Activated B cell treated with CpG ODN at 0.5 μM for 24 hours (primary cell): ENCODE measurements at regions of chr12 and their contacts with region 1.

Region 1: DNA sequence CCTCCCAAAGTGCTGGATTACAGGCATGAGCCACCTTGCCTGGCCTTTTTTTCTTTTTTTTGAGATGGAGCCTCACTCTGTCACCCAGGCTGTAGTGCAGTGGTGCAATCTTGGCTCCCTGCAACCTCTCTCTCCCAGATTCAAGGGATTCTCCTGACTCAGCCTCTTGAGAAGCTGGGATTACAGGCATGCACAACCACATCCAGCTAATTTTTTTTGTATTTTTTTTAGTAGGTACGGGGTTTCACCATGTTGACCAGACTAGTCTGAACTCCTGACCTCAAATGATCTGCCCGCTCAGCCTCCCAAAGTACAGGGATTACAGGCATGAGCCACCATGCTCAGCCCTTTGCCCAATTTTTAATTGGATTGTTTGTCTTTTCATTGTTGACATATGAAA is 58.0 kb downstream of the SINHCAF start:
- DNase-seq: no peak
- ATAC-seq: no peak
- H3K4me3 Mint-ChIP-seq: no peak overlapping the region
- H3K27ac Mint-ChIP-seq: no peak overlapping the region
- H3K4me1 Mint-ChIP-seq: no peaks in the 10 kb centered on the region
- H3K27me3 Mint-ChIP-seq: no peaks in the 10 kb centered on the region
- CTCF ChIP-seq: no peak

Region 2: DNA sequence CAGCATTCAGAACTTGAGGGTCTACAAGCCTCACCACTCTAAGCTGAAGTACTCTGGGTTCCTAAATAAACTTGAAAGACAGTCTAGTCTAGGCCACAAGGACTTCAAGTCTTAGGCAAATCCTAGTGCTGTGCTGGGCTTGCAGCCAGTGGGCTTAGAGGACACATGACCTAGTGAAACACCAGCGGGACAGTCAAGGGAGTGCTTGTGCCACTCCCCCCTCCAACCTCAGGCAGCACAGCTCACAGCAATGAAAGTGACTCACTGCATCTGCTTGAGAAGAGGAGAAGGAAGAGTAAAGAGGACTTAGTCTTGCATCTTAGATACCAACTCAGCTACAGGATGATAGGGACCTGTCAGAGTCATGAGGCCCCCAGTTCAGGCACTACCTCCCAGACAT is 1010.3 kb before region 1 on chr12:
- CTCF ChIA-PET with region 1: no interaction called
- POLR2A ChIA-PET with region 1: no interaction called
- intact Hi-C with region 1: no loop called
- DNase-seq: no peak
- ATAC-seq: no peak
- H3K4me3 Mint-ChIP-seq: no peak overlapping the region
- H3K27ac Mint-ChIP-seq: no peak overlapping the region
- H3K4me1 Mint-ChIP-seq: no peaks in the 10 kb centered on the region
- H3K27me3 Mint-ChIP-seq: no peaks in the 10 kb centered on the region
- CTCF ChIP-seq: no peak

Region 3: DNA sequence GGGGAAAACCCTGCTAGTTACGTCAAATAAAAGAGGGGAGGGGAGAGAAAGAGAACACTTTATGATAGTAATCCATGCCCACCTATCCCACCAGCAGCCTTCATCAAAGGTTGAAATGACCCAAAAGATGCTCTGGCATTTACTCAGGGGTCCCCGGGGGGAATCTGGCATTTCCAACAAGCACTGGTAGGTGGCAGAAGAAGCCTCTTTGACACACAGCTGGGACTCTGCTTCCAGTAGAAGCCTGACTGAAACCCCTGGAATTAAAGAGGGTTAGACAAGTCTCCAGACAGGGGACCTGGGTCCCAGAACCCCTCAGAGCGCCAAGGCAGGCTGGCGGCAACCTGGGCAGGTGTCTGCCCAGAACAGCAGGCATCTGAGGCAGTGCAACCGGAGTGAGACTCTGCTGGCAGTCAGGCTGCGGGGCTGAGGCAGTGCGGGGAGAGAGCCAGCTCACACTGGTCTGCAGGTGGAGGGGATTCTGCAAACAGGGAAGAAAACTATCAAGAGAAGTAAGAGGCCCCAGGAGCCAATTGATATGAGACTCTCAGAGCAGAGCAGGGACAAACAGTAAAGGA is 428.2 kb before region 1 on chr12:
- CTCF ChIA-PET with region 1: no interaction called
- POLR2A ChIA-PET with region 1: no interaction called
- intact Hi-C with region 1: no loop called
- DNase-seq: no peak
- ATAC-seq: no peak
- H3K4me3 Mint-ChIP-seq: no peak overlapping the region
- H3K27ac Mint-ChIP-seq: no peak overlapping the region
- H3K4me1 Mint-ChIP-seq: no peaks in the 10 kb centered on the region
- H3K27me3 Mint-ChIP-seq: peaks cover 25% of the 10 kb centered on the region
- CTCF ChIP-seq: no peak

Region 4: GRCh38 chr12:31117203-31118011 is 150.6 kb before region 1 on chr12:
- CTCF ChIA-PET with region 1: interaction called, 5 read pairs
- POLR2A ChIA-PET with region 1: no interaction called
- intact Hi-C with region 1: loop called (anchors 1 kb)
- DNase-seq: peak; percentile 55
- ATAC-seq: peak; percentile 73
- H3K4me3 Mint-ChIP-seq: peak overlapping the region; percentile 79
- H3K27ac Mint-ChIP-seq: no peak overlapping the region
- H3K4me1 Mint-ChIP-seq: peaks cover 9% of the 10 kb centered on the region
- H3K27me3 Mint-ChIP-seq: no peaks in the 10 kb centered on the region
- CTCF ChIP-seq: no peak

Region 5: DNA sequence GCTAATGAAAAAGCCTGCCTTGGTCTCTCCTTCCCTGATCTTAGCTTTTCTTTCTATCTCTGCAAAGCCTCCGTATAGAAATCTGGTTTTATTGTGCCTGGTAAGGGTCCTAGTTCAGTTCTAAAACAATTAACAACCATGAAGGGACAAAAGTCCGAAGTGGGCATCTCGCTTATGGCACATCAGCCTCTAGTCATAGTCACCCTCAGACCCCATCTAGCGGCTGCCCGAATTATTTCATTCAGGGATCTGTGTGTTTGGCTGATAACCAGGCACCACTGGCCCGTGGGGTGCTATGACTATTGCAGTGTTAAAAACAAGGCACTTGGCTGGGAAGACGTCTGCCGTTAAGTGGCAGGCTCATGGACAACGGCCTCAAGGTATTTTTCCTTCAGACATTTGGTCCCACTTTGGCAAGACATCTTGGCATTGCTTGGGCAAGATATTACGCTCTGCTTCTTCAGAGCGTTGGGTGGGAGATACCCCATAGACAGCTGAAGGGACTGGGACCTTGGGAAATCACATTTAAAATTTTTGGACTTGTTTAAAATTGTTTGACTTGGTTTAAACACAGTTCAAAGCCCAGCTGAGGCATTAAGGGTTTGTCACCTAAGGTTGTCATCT is 29.1 kb before region 1 on chr12:
- CTCF ChIA-PET with region 1: interaction called, 27 read pairs
- POLR2A ChIA-PET with region 1: no interaction called
- intact Hi-C with region 1: loop called (anchors 1 kb)
- DNase-seq: peak; percentile 37
- ATAC-seq: peak; percentile 93
- H3K4me3 Mint-ChIP-seq: no peak overlapping the region
- H3K27ac Mint-ChIP-seq: no peak overlapping the region
- H3K4me1 Mint-ChIP-seq: peaks cover 10% of the 10 kb centered on the region
- H3K27me3 Mint-ChIP-seq: peaks cover 23% of the 10 kb centered on the region
- CTCF ChIP-seq: no peak

Region 6: GRCh38 chr12:31245822-31246469 is 22.0 kb before region 1 on chr12:
- CTCF ChIA-PET with region 1: interaction called, 27 read pairs
- POLR2A ChIA-PET with region 1: no interaction called
- intact Hi-C with region 1: loop called (anchors 2 kb)
- DNase-seq: no peak
- ATAC-seq: no peak
- H3K4me3 Mint-ChIP-seq: no peak overlapping the region
- H3K27ac Mint-ChIP-seq: no peak overlapping the region
- H3K4me1 Mint-ChIP-seq: no peaks in the 10 kb centered on the region
- H3K27me3 Mint-ChIP-seq: peaks cover 3% of the 10 kb centered on the region
- CTCF ChIP-seq: no peak

Region 7: DNA sequence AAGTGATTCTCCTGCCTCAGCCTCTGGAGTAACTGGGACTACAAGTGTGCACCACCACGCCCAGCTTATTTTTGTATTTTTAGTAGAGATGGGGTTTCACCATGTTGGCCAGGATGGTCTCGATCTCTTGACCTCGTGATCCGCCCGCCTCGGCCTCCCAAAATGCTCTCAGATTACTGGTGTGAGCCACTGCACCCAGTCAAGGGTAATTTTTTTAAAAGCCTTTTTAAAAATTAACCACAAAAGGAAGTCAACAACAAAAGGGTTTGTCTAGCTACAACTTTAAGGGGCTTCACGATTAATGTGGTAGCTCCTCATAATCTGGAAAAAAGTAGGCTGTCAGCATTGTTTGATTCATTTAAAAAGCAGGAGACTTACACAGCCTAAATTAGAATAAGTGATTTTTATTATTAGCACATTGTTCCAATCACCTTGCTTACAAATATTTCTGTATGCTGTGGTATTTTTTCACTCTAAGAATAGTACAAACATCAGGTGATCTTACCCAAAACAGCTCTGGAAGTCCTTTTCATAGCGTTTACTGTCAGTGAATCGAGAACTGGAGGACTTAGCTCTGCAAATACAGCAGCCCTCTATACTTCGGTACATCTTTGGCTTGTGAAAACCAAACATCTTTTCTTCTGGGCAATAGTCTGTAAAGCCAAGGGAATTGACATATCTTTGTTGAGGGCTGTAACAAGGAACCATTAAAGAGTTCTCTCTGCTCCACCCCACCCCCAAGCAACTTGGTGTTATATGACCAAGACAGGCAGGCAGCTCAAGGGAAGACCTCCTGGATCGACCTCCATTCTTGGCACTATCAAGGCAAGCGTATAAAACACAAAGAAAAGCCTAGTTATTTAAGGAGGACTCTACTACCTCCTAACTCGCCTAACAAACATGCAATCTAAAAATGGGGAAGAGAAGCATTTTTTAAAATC is 29.9 kb after region 1 on chr12:
- CTCF ChIA-PET with region 1: interaction called, 17 read pairs
- POLR2A ChIA-PET with region 1: interaction called, 3 read pairs
- intact Hi-C with region 1: no loop called
- DNase-seq: no peak
- ATAC-seq: peak; percentile 22
- H3K4me3 Mint-ChIP-seq: peak overlapping the region; percentile 78
- H3K27ac Mint-ChIP-seq: peak overlapping the region; percentile 95
- H3K4me1 Mint-ChIP-seq: peaks cover 64% of the 10 kb centered on the region
- H3K27me3 Mint-ChIP-seq: no peaks in the 10 kb centered on the region
- CTCF ChIP-seq: no peak

Region 8: GRCh38 chr12:31362759-31363415 is 94.9 kb after region 1 on chr12:
- CTCF ChIA-PET with region 1: interaction called, 16 read pairs
- POLR2A ChIA-PET with region 1: no interaction called
- intact Hi-C with region 1: no loop called
- DNase-seq: no peak
- ATAC-seq: peak; percentile 81
- H3K4me3 Mint-ChIP-seq: peak overlapping the region; percentile 58
- H3K27ac Mint-ChIP-seq: peak overlapping the region; percentile 47
- H3K4me1 Mint-ChIP-seq: peaks cover 19% of the 10 kb centered on the region
- H3K27me3 Mint-ChIP-seq: no peaks in the 10 kb centered on the region
- CTCF ChIP-seq: no peak

Region 9: GRCh38 chr12:32198555-32198954 is 930.6 kb after region 1 on chr12:
- CTCF ChIA-PET with region 1: no interaction called
- POLR2A ChIA-PET with region 1: no interaction called
- intact Hi-C with region 1: no loop called
- DNase-seq: no peak
- ATAC-seq: no peak
- H3K4me3 Mint-ChIP-seq: no peak overlapping the region
- H3K27ac Mint-ChIP-seq: no peak overlapping the region
- H3K4me1 Mint-ChIP-seq: peaks cover 4% of the 10 kb centered on the region
- H3K27me3 Mint-ChIP-seq: no peaks in the 10 kb centered on the region
- CTCF ChIP-seq: no peak